Activated CD8-positive, alpha-beta T cell treated with anti-CD3 and anti-CD28 coated beads, Interleukin-2, amount 10 ng/mL, durations not matched to agents 7 days and 5 days (primary cell): ENCODE measurements at regions of chr9 and their contacts with region 1.

Region 1: GRCh38 chr9:89477811-89478630 is 19.9 kb downstream of the SEMA4D start:
- DNase-seq: peak; percentile 67
- ATAC-seq: peak; percentile 57
- H3K4me3 Mint-ChIP-seq: peak overlapping the region; percentile 71
- H3K27ac Mint-ChIP-seq: peak overlapping the region; percentile 91
- H3K4me1 Mint-ChIP-seq: peaks cover 91% of the 10 kb centered on the region
- H3K27me3 Mint-ChIP-seq: no peaks in the 10 kb centered on the region

Region 2: GRCh38 chr9:89340332-89340731 is 137.7 kb before region 1 on chr9:
- CTCF ChIA-PET with region 1: no interaction called
- POLR2A ChIA-PET with region 1: no interaction called
- DNase-seq: no peak
- ATAC-seq: no peak
- H3K4me3 Mint-ChIP-seq: no peak overlapping the region
- H3K27ac Mint-ChIP-seq: no peak overlapping the region
- H3K4me1 Mint-ChIP-seq: peaks cover 1% of the 10 kb centered on the region
- H3K27me3 Mint-ChIP-seq: no peaks in the 10 kb centered on the region

Region 3: GRCh38 chr9:89455356-89455824 is 22.6 kb before region 1 on chr9:
- CTCF ChIA-PET with region 1: interaction called, 3 read pairs
- POLR2A ChIA-PET with region 1: interaction called, 10 read pairs
- DNase-seq: peak; percentile 66
- ATAC-seq: peak; percentile 55
- H3K4me3 Mint-ChIP-seq: peak overlapping the region; percentile 68
- H3K27ac Mint-ChIP-seq: peak overlapping the region; percentile 96
- H3K4me1 Mint-ChIP-seq: peaks cover 97% of the 10 kb centered on the region
- H3K27me3 Mint-ChIP-seq: no peaks in the 10 kb centered on the region

Region 4: DNA sequence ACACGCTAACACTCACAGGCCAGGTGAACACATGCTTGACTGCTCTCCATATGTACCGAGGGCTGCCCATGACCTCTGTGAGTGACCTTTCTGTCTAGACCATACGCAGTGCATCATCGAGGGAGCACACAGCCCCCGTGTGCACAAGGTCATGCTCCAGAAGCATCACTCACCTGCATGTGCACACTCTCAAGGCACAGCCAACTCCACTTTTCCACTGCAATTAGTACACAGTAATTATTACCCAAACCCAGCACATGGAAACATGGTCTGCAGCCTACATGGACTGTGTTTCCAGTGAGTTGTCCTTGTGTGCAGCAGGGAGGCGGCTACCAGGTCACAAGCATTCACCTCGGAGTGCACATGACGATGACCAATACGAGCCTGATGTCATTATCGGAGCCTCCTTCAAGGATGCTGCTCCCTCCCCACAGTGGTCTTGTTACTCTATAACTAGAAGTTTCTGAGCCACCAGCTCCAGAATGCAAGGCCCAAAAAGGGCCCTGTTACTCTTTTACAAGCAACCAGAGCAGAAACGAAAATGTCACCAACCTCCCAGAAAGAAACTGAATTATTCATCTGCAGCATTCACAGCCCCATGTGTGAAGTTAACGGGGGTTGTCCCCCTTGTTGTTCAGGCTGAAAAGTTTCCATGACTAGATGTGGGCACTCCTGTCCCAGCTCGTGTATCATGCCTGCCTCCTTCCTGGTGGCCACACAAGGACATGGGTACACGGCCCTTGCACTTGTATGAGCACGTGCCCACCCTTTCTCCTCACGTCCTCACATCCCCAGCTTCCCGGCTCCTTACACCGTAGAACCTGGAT is 11.4 kb before region 1 on chr9:
- CTCF ChIA-PET with region 1: interaction called, 4 read pairs
- POLR2A ChIA-PET with region 1: interaction called, 10 read pairs
- DNase-seq: no peak
- ATAC-seq: peak; percentile 25
- H3K4me3 Mint-ChIP-seq: peak overlapping the region; percentile 46
- H3K27ac Mint-ChIP-seq: peak overlapping the region; percentile 96
- H3K4me1 Mint-ChIP-seq: peaks cover 98% of the 10 kb centered on the region
- H3K27me3 Mint-ChIP-seq: no peaks in the 10 kb centered on the region

Region 5: GRCh38 chr9:89489548-89490530 is 11.8 kb after region 1 on chr9:
- CTCF ChIA-PET with region 1: interaction called, 5 read pairs
- POLR2A ChIA-PET with region 1: interaction called, 14 read pairs
- DNase-seq: no peak
- ATAC-seq: peak; percentile 61
- H3K4me3 Mint-ChIP-seq: peak overlapping the region; percentile 52
- H3K27ac Mint-ChIP-seq: peak overlapping the region; percentile 81
- H3K4me1 Mint-ChIP-seq: peaks cover 95% of the 10 kb centered on the region
- H3K27me3 Mint-ChIP-seq: no peaks in the 10 kb centered on the region

Region 6: GRCh38 chr9:89505911-89506310 is 27.9 kb after region 1 on chr9:
- CTCF ChIA-PET with region 1: interaction called, 4 read pairs
- POLR2A ChIA-PET with region 1: interaction called, 13 read pairs
- DNase-seq: no peak
- ATAC-seq: no peak
- H3K4me3 Mint-ChIP-seq: no peak overlapping the region
- H3K27ac Mint-ChIP-seq: no peak overlapping the region
- H3K4me1 Mint-ChIP-seq: peaks cover 93% of the 10 kb centered on the region
- H3K27me3 Mint-ChIP-seq: no peaks in the 10 kb centered on the region

Region 7: GRCh38 chr9:89592985-89593694 is 115.1 kb after region 1 on chr9:
- CTCF ChIA-PET with region 1: no interaction called
- POLR2A ChIA-PET with region 1: no interaction called
- DNase-seq: no peak
- ATAC-seq: no peak
- H3K4me3 Mint-ChIP-seq: no peak overlapping the region
- H3K27ac Mint-ChIP-seq: no peak overlapping the region
- H3K4me1 Mint-ChIP-seq: peaks cover 2% of the 10 kb centered on the region
- H3K27me3 Mint-ChIP-seq: peaks cover 29% of the 10 kb centered on the region

Region 8: GRCh38 chr9:89602978-89603766 is 125.2 kb after region 1 on chr9:
- CTCF ChIA-PET with region 1: no interaction called
- POLR2A ChIA-PET with region 1: no interaction called
- DNase-seq: peak; percentile 94
- ATAC-seq: peak; percentile 27
- H3K4me3 Mint-ChIP-seq: peak overlapping the region; percentile 79
- H3K27ac Mint-ChIP-seq: peak overlapping the region; percentile 53
- H3K4me1 Mint-ChIP-seq: peaks cover 31% of the 10 kb centered on the region
- H3K27me3 Mint-ChIP-seq: peaks cover 18% of the 10 kb centered on the region